ENCODE measurements at regions of chr3 and their contacts with region 1.

Region 1: DNA sequence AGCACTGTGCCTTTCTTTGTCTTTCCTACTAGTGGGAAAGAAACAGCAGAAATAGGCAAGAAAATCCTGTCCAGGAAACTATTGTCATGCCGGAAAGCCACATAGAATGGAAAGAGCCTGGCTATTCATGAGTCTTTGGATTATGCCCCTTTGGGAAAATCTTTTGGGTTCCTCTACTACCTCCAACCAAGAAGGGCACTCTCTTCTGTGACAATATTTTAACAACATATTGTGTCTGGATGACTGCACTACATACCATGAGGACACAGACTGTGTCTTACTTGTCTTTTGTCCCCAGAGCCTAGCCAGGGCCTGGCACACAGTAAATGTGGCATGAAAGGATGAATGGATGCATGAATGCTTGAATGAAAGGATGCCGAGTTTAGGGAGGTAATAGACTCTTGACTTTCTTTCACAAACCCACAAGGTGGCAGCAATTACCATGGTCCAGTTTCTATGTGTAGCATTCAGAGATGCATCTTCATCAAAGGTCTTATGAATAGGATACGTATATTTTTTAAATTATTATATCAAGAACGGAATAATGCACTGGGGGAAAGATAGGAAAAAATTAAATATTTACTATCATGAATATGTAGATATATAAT is 30.3 kb downstream of the ARL14 start:
- DNase-seq: peak in 1 of 2 experiments; percentile 40
- H3K4me3 ChIP-seq: no peak overlapping the region
- H3K4me3 Mint-ChIP-seq: no peak overlapping the region
- H3K27ac Mint-ChIP-seq: no peak overlapping the region
- H3K4me1 ChIP-seq: no peaks in the 10 kb centered on the region
- H3K4me1 Mint-ChIP-seq: no peaks in the 10 kb centered on the region
- H3K27me3 ChIP-seq: no peaks in the 10 kb centered on the region
- H3K27me3 Mint-ChIP-seq: peaks cover 15% of the 10 kb centered on the region
- CTCF ChIP-seq: peak; percentile 47

Region 2: DNA sequence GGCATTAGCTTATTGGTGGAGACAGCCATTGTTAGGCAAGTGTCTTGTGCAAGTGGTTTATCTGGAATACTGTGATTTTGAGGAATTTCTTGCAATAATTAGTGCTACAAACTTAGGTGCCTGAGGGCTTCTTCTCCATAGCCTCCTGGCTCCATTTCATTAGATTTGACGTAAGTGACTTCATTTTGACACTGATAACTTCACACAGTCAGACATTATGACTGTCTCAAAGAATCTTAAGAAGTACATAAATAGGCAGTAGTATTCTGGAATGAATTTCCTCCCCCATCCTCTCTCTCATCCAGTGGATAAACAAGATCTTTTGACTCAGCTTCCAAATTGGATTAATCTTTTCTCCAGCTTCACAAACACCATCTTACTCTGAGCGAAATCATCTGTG is 11.4 kb before region 1 on chr3:
- CTCF ChIA-PET with region 1: no interaction called
- POLR2A ChIA-PET with region 1: no interaction called
- intact Hi-C with region 1: no loop called
- DNase-seq: no peak
- H3K4me3 ChIP-seq: no peak overlapping the region
- H3K4me3 Mint-ChIP-seq: no peak overlapping the region
- H3K27ac Mint-ChIP-seq: no peak overlapping the region
- H3K4me1 ChIP-seq: peaks cover 15% of the 10 kb centered on the region
- H3K4me1 Mint-ChIP-seq: no peaks in the 10 kb centered on the region
- H3K27me3 ChIP-seq: no peaks in the 10 kb centered on the region
- H3K27me3 Mint-ChIP-seq: no peaks in the 10 kb centered on the region
- CTCF ChIP-seq: no peak

Region 3: GRCh38 chr3:160735826-160736225 is 28.5 kb after region 1 on chr3:
- CTCF ChIA-PET with region 1: no interaction called
- POLR2A ChIA-PET with region 1: no interaction called
- intact Hi-C with region 1: no loop called
- DNase-seq: no peak
- H3K4me3 ChIP-seq: no peak overlapping the region
- H3K4me3 Mint-ChIP-seq: no peak overlapping the region
- H3K27ac Mint-ChIP-seq: no peak overlapping the region
- H3K4me1 ChIP-seq: no peaks in the 10 kb centered on the region
- H3K4me1 Mint-ChIP-seq: no peaks in the 10 kb centered on the region
- H3K27me3 ChIP-seq: no peaks in the 10 kb centered on the region
- H3K27me3 Mint-ChIP-seq: peaks cover 11% of the 10 kb centered on the region
- CTCF ChIP-seq: no peak

Region 4: DNA sequence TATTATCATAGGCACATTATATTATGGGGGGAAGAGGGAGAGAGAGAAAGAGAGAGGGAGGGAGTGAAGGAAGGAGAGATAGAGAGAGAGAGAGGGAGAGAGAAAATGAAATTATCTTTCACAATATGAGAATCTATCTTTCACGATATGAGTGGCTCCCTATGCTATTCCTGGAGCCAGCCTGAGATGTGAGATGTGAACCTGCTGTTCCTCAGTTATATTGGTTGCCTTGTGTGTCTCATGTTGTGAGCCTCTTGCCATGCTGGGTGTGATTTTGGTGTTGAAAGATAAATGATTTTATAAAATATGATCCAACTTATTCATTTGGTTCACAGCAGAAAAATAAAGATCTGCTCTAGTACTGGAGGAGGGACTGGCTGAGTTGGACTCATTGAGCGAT is 197.4 kb after region 1 on chr3:
- CTCF ChIA-PET with region 1: no interaction called
- POLR2A ChIA-PET with region 1: no interaction called
- intact Hi-C with region 1: no loop called
- DNase-seq: no peak
- H3K4me3 ChIP-seq: no peak overlapping the region
- H3K4me3 Mint-ChIP-seq: no peak overlapping the region
- H3K27ac Mint-ChIP-seq: no peak overlapping the region
- H3K4me1 ChIP-seq: no peaks in the 10 kb centered on the region
- H3K4me1 Mint-ChIP-seq: no peaks in the 10 kb centered on the region
- H3K27me3 ChIP-seq: no peaks in the 10 kb centered on the region
- H3K27me3 Mint-ChIP-seq: peaks cover 13% of the 10 kb centered on the region
- CTCF ChIP-seq: no peak

Region 5: DNA sequence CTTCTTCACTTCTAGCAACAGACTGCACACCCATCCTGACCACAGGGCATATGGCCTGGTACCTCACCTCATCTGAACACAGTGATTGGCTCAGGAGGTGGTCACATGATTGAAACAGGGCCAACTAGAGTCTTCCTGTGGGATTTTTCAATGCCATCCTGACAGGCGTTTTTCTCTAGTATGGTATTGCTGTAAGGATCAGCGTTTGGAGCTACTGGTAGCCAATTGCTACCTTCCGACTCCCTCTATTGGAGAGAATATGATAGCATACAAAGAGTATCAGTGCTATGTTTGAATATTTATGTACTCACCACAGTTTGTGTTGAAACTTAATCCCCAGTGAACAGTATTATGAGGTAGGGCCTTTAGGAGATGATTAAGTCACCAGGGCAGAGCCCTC is 221.0 kb after region 1 on chr3:
- CTCF ChIA-PET with region 1: no interaction called
- POLR2A ChIA-PET with region 1: no interaction called
- intact Hi-C with region 1: loop called (anchors 1 kb)
- DNase-seq: no peak
- H3K4me3 ChIP-seq: no peak overlapping the region
- H3K4me3 Mint-ChIP-seq: no peak overlapping the region
- H3K27ac Mint-ChIP-seq: no peak overlapping the region
- H3K4me1 ChIP-seq: no peaks in the 10 kb centered on the region
- H3K4me1 Mint-ChIP-seq: no peaks in the 10 kb centered on the region
- H3K27me3 ChIP-seq: no peaks in the 10 kb centered on the region
- H3K27me3 Mint-ChIP-seq: peaks cover 3% of the 10 kb centered on the region
- CTCF ChIP-seq: no peak